ENCODE measurements at regions of chr1 and their contacts with region 1.

Region 1: DNA sequence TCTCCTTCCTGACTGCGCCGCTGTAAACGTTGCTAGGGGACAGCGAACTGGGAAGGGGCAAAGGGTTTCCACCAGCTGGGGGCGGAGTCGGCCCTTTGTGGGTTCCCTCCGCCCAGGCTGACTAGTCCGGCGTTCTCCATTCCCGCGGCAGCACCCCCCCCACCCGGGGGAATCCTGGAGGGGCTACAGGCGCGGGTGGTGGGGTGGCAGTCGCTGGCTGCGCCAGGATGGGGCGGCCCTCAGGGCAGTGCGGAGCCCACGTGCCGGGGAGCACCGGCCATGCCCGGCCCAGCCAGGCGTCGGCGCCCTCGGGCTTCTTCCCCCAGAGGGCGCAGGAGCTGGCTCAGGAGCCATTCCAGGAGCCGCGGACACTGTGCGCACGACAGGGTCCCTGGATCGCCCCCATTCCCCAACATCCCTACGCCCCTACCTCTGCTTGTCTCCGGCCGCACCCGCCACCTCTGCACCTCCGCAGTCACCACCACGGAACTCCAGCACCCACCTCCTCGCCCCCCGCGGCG is 476 bp downstream of the BATF3 start:
- DNase-seq: peak in 13 of 14 experiments; percentile 21 to 79 (median 30)
- ATAC-seq: peak; percentile 60
- H3K4me3 ChIP-seq: peak overlapping the region; percentile 62
- H3K4me3 Mint-ChIP-seq: peak overlapping the region; percentile 92
- H3K27ac ChIP-seq: no peak overlapping the region
- H3K27ac Mint-ChIP-seq: no peak overlapping the region
- H3K4me1 ChIP-seq: peaks cover 34% of the 10 kb centered on the region
- H3K4me1 Mint-ChIP-seq: peaks cover 50% of the 10 kb centered on the region
- H3K27me3 ChIP-seq: no peaks in the 10 kb centered on the region
- H3K27me3 Mint-ChIP-seq: no peaks in the 10 kb centered on the region
- CTCF ChIP-seq: peak; percentile 64

Region 2: DNA sequence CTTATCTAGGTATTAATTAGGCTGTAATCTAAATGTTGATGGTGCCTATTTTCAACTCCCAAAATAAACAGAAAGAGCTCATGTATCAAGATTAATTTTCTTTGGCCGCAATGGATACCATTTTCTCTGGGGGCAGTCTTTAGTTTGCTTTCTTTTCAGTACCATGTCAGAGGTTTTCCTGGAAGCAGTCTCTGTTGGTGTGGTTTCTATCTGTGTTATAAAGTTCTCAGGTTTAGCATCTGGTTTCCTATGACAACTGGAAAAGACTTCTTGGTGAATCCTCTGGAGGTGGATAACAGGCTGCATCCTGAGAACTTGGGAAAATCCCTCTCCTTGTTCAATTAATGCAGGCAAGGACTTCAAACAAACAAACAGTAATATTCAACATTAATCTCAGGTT is 39.2 kb after region 1 on chr1:
- CTCF ChIA-PET with region 1: no interaction called
- POLR2A ChIA-PET with region 1: no interaction called
- intact Hi-C with region 1: loop called in 1 of 2 experiments (anchors 5 kb)
- DNase-seq: peak in 1 of 14 experiments; percentile 9
- ATAC-seq: no peak
- H3K4me3 ChIP-seq: no peak overlapping the region
- H3K4me3 Mint-ChIP-seq: no peak overlapping the region
- H3K27ac ChIP-seq: no peak overlapping the region
- H3K27ac Mint-ChIP-seq: no peak overlapping the region
- H3K4me1 ChIP-seq: no peaks in the 10 kb centered on the region
- H3K4me1 Mint-ChIP-seq: peaks cover 21% of the 10 kb centered on the region
- H3K27me3 ChIP-seq: no peaks in the 10 kb centered on the region
- H3K27me3 Mint-ChIP-seq: no peaks in the 10 kb centered on the region
- CTCF ChIP-seq: no peak

Region 3: GRCh38 chr1:212749821-212750535 is 50.8 kb after region 1 on chr1:
- CTCF ChIA-PET with region 1: interaction called, 6 read pairs
- POLR2A ChIA-PET with region 1: interaction called, 7 read pairs
- intact Hi-C with region 1: loop called in 1 of 2 experiments (anchors 5 kb)
- DNase-seq: peak in 4 of 14 experiments; percentile 13 to 67 (median 42)
- ATAC-seq: peak; percentile 27
- H3K4me3 ChIP-seq: no peak overlapping the region
- H3K4me3 Mint-ChIP-seq: peak overlapping the region; percentile 4
- H3K27ac ChIP-seq: peak overlapping the region in 1 of 2 donors; percentile 14
- H3K27ac Mint-ChIP-seq: peak overlapping the region; percentile 78
- H3K4me1 ChIP-seq: peaks cover 29% of the 10 kb centered on the region
- H3K4me1 Mint-ChIP-seq: peaks cover 54% of the 10 kb centered on the region
- H3K27me3 ChIP-seq: no peaks in the 10 kb centered on the region
- H3K27me3 Mint-ChIP-seq: no peaks in the 10 kb centered on the region
- CTCF ChIP-seq: peak; percentile 69

Region 4: GRCh38 chr1:212760126-212760823 is 61.1 kb after region 1 on chr1:
- CTCF ChIA-PET with region 1: interaction called, 5 read pairs
- POLR2A ChIA-PET with region 1: no interaction called
- intact Hi-C with region 1: loop called in 1 of 2 experiments (anchors 2 kb)
- DNase-seq: peak in 13 of 14 experiments; percentile 19 to 72 (median 39)
- ATAC-seq: peak; percentile 78
- H3K4me3 ChIP-seq: no peak overlapping the region
- H3K4me3 Mint-ChIP-seq: no peak overlapping the region
- H3K27ac ChIP-seq: no peak overlapping the region
- H3K27ac Mint-ChIP-seq: no peak overlapping the region
- H3K4me1 ChIP-seq: peaks cover 9% of the 10 kb centered on the region
- H3K4me1 Mint-ChIP-seq: peaks cover 37% of the 10 kb centered on the region
- H3K27me3 ChIP-seq: no peaks in the 10 kb centered on the region
- H3K27me3 Mint-ChIP-seq: no peaks in the 10 kb centered on the region
- CTCF ChIP-seq: peak; percentile 39

Region 5: GRCh38 chr1:212782422-212783154 is 83.4 kb after region 1 on chr1:
- CTCF ChIA-PET with region 1: interaction called, 3 read pairs
- POLR2A ChIA-PET with region 1: interaction called, 3 read pairs
- intact Hi-C with region 1: loop called in 1 of 2 experiments (anchors 10 kb)
- DNase-seq: peak in 3 of 14 experiments; percentile 40 to 59 (median 47)
- ATAC-seq: peak; percentile 60
- H3K4me3 ChIP-seq: no peak overlapping the region
- H3K4me3 Mint-ChIP-seq: no peak overlapping the region
- H3K27ac ChIP-seq: no peak overlapping the region
- H3K27ac Mint-ChIP-seq: peak overlapping the region; percentile 11
- H3K4me1 ChIP-seq: no peaks in the 10 kb centered on the region
- H3K4me1 Mint-ChIP-seq: peaks cover 8% of the 10 kb centered on the region
- H3K27me3 ChIP-seq: no peaks in the 10 kb centered on the region
- H3K27me3 Mint-ChIP-seq: no peaks in the 10 kb centered on the region
- CTCF ChIP-seq: peak; percentile 72